ENCODE measurements at regions of chr10 and their contacts with region 1.

Region 1: DNA sequence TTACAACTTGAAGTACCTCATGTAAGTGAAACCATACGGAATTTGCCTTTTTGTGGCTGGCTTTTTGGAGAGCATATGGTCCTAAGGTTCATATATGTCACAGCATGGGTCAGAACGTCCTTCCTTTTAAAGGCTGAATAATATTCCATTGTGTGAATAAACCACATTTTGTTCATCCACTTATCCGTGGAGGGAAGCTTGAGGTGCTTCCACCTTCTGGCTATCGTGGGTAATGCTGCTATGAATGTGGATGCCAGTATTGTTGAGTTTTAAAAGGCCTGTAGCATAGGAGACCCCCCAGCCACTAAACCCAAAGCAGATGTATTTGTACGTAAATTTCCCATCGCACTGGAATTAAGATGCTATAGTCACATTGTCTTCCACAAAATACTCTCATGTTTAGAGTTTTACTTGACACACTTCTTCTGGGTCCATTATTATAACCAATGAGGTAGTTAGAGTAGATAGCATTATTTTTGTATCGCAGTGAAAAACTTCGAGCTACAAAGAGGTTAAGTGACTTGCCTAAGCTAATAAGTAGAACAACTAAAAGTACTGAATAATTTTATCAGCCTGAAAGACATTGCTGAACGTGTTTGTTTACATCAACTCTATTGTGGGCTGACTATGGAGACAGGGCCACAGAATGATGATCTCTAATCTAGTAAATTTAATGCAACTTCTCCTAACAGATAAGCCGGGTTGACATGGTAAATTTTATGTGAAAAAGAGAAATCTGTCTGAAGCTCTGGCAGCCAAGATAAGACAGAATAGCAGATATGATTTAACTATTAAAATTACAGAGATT is 183.0 kb upstream of the CTBP2 start:
- DNase-seq: peak; percentile 36
- ATAC-seq: peak; percentile 79
- H3K4me3 ChIP-seq: no peak overlapping the region
- H3K27ac ChIP-seq: no peak overlapping the region
- H3K4me1 ChIP-seq: peaks cover 3% of the 10 kb centered on the region; the same call in 1 of the 2 replicates
- H3K27me3 ChIP-seq: peaks cover 2% of the 10 kb centered on the region
- CTCF ChIP-seq: peak; percentile 54
- POLR2A ChIP-seq: no peak
- RAD21 ChIP-seq: peak; percentile 60

Region 2: GRCh38 chr10:124992462-124993344 is 350.6 kb before region 1 on chr10:
- CTCF ChIA-PET with region 1: no interaction called
- POLR2A ChIA-PET with region 1: no interaction called
- dilution Hi-C with region 1: no loop called
- in situ Hi-C with region 1: no loop called
- intact Hi-C with region 1: loop called (anchors 5 kb)
- DNase-seq: peak; percentile 63
- ATAC-seq: peak; percentile 74
- H3K4me3 ChIP-seq: no peak overlapping the region
- H3K27ac ChIP-seq: no peak overlapping the region
- H3K4me1 ChIP-seq: no peaks in the 10 kb centered on the region
- H3K27me3 ChIP-seq: no peaks in the 10 kb centered on the region
- CTCF ChIP-seq: peak; percentile 47
- POLR2A ChIP-seq: no peak
- RAD21 ChIP-seq: peak; percentile 55

Region 3: DNA sequence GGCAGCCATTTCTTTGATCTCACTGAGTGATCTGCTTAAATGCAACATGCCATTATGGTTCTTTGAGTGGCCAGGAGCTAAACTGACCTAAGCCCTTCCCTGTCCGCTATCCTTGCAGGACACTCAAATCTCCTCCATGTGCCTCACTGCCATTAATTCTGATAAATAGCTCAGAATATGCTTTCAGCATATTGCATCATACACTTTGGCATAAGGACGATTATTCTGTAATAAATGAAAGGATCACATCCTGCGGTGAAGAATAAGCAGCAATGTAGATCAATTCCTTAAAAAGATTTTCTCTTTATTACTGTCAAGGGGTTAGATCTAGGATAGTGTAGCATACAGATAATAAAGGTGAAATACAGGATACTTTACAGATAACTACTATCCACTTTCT is 48.8 kb after region 1 on chr10:
- CTCF ChIA-PET with region 1: no interaction called
- POLR2A ChIA-PET with region 1: no interaction called
- dilution Hi-C with region 1: no loop called
- in situ Hi-C with region 1: no loop called
- intact Hi-C with region 1: no loop called
- DNase-seq: no peak
- ATAC-seq: no peak
- H3K4me3 ChIP-seq: no peak overlapping the region
- H3K27ac ChIP-seq: no peak overlapping the region
- H3K4me1 ChIP-seq: no peaks in the 10 kb centered on the region
- H3K27me3 ChIP-seq: no peaks in the 10 kb centered on the region
- CTCF ChIP-seq: no peak
- POLR2A ChIP-seq: no peak
- RAD21 ChIP-seq: no peak

Region 4: DNA sequence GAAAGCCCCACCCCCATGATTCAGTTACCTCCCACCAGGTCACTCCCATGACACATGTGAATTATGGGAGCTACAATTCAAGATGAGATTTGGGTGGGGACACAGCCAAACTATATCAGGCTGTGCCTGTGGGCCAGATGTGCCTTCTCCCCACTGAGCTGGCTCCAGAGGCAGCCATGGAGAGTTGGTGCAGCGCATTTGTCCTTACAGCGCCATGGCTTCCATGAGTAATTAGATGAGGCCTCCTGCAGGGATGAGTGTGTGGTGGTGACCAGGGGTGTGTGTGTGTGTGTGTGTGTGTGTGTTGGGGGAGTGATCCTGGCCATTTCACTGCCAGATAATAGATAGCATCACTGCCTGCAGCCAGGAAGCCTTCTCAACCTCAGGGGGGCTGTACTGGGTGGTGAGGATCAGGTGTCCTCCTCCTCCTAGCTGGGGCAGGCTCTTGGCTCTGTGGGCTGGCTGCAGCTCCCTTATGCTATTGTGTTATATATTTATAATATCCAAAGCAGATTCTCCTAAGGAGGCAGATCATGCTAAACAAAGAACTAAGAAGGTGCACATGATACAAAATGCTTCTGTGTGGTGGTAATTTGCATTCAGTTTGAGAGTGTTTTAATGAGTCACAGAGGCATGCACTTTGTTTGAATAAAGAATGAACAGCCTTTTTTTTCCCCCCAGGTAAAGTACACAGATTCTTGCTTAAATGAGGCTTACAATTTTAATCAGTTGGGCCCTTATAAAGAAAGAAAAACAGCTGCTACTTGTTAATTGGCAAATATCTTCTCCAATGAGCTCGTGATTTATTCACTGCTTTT is 647.9 kb after region 1 on chr10:
- CTCF ChIA-PET with region 1: no interaction called
- POLR2A ChIA-PET with region 1: no interaction called
- dilution Hi-C with region 1: no loop called
- in situ Hi-C with region 1: no loop called
- intact Hi-C with region 1: no loop called
- DNase-seq: no peak
- ATAC-seq: no peak
- H3K4me3 ChIP-seq: no peak overlapping the region
- H3K27ac ChIP-seq: no peak overlapping the region
- H3K4me1 ChIP-seq: no peaks in the 10 kb centered on the region
- H3K27me3 ChIP-seq: peaks cover 38% of the 10 kb centered on the region
- CTCF ChIP-seq: no peak
- POLR2A ChIP-seq: no peak
- RAD21 ChIP-seq: no peak